ENCODE measurements at regions of chr11 and their contacts with region 1.

Region 1: DNA sequence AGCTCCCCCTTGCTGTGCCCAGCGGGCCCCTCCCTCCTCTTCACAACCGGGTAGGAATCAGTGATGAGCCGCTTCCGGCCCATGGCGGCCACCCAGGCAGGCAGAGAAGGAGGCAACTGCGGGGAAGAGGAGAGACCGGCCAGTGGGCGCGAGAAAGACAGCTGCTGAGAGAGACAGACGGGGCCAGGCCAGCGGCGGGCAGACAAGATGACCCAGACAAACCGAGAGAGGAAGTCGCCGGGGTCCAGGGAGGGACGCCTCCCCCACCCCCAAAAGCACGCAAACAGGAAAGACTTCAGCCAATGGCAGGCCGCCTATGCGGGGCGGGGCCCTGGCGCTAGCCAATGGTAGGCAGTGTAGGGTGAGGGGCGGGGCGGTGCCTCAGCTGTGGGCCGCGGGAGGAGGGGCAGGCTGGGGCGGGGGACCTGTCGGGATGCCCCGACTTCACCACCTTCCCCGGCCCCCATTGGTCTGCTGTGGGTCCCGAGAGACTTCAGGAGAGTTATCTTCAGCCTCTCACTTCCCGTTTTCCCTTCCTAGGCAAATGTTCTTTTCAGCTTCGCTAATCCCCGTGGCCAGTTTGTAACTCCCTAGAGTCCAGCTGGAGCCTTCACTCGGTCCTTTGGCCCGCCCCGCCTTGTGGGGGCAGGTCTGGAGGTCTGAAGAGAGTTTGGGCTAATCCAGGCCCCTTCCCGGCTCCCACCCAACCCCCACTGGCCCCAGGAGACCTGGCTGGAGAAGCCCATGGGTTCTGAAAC is at the start of gene POLD4:
- DNase-seq: peak; percentile 98
- ATAC-seq: peak; percentile 81
- H3K4me3 ChIP-seq: peak within 1 kb of the TSS; percentile 60 to 99 (median 83)
- H3K4me3 Mint-ChIP-seq: peak within 1 kb of the TSS; percentile 96
- H3K27ac ChIP-seq: peak within 1 kb of the TSS; percentile 94 to 96
- H3K27ac Mint-ChIP-seq: peak within 1 kb of the TSS; percentile 100
- H3K4me1 ChIP-seq: peaks cover 80 to 90% of the 10 kb centered on the region in 2 donors
- H3K4me1 Mint-ChIP-seq: peaks cover 87% of the 10 kb centered on the region
- H3K27me3 ChIP-seq: no peaks in the 10 kb centered on the region
- H3K27me3 Mint-ChIP-seq: no peaks in the 10 kb centered on the region
- CTCF ChIP-seq: no peak
- total RNA-seq, gene POLD4: 190 and 210 TPM in 2 replicates

Region 2: DNA sequence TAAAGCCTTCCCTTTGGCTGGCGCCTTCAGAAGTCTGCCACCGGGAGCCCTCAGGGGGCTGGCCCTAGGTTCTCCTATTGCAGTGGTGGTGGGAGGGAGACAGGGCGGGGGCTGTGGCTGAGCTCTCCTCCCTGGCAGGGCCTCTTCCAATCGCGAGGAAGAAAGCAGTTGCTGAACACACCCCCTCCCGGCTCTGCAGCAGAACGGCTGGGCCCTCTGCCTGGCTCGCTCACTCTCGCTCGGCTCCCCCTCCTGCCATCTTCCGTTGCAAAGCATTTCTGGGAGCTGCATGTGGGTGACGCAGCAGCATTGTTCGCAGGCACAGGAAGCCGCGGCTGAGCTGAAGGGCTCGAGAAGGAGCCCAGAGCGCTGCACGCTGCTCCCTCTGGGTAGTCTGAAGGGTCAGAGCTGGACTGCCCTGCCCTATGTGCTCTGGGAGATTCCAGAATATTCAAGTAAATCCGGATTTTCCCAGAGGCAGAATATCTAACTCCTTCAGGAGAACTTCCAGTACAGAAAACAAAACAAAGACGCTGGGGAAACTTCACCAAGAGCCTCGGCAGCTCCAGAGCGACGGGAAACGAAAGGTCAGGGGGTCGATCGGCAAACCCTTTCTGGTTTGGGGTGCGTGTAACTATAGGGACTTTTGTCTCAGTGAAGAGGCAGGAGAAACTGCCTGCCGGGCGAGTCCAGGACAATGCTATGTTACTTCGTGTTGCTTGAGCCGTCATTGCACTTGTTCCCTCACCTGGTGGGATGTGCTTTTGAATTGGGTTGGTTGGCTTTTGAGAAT is 113.5 kb before region 1 on chr11:
- CTCF ChIA-PET with region 1: interaction called, 5 read pairs
- POLR2A ChIA-PET with region 1: interaction called, 12 read pairs
- intact Hi-C with region 1: no loop called
- DNase-seq: peak; percentile 96
- ATAC-seq: peak; percentile 94
- H3K4me3 ChIP-seq: peak overlapping the region; percentile 71 to 99 (median 82)
- H3K4me3 Mint-ChIP-seq: peak overlapping the region; percentile 96
- H3K27ac ChIP-seq: peak overlapping the region; percentile 86 to 91
- H3K27ac Mint-ChIP-seq: peak overlapping the region; percentile 99
- H3K4me1 ChIP-seq: peaks cover 26 to 34% of the 10 kb centered on the region in 2 donors
- H3K4me1 Mint-ChIP-seq: peaks cover 43% of the 10 kb centered on the region
- H3K27me3 ChIP-seq: no peaks in the 10 kb centered on the region
- H3K27me3 Mint-ChIP-seq: no peaks in the 10 kb centered on the region
- CTCF ChIP-seq: no peak

Region 3: DNA sequence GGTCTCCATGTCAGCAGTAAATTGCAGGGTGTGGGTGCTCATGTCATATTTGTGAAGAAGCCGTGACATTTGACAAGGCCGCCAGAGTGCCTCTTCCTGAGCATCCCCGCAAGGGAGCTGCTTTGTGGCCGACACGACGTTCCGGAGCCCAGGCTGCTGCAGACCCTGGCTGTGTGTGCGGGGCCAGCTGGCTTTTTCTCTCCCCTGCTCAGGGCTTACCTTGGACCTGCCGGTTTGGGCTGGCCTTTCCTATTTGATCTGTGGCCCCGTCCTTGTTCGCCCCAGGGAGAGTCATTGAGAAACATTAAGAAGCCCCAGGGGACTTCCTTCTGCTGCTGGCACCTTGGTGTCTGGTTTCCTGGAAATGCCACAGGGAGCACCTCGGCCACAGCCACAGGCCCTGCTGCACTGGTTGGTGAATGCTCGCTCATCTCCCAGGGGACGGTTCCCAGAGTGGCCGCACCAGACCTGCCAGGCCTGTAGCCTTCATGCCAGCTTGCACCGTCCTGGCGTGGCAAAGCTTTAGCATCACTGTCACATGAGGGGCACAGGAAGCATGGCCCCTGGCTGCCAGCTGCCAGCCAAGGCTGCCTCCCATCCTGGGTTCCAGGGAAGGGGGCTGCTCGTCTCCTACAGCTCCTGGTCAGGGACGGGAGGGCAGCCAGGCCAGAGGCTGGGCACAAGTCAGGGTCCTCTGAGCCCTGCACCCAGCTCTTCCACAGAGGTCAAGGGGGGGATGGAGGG is 81.8 kb before region 1 on chr11:
- CTCF ChIA-PET with region 1: interaction called, 16 read pairs
- POLR2A ChIA-PET with region 1: interaction called, 26 read pairs
- intact Hi-C with region 1: no loop called
- DNase-seq: peak; percentile 65
- ATAC-seq: peak; percentile 29
- H3K4me3 ChIP-seq: peak overlapping the region in 4 of 5 experiments; percentile 0 to 89 (median 82)
- H3K4me3 Mint-ChIP-seq: peak overlapping the region; percentile 98
- H3K27ac ChIP-seq: peak overlapping the region; percentile 73 to 82
- H3K27ac Mint-ChIP-seq: peak overlapping the region; percentile 98
- H3K4me1 ChIP-seq: peaks cover 91 to 93% of the 10 kb centered on the region in 2 donors
- H3K4me1 Mint-ChIP-seq: peaks cover 92% of the 10 kb centered on the region
- H3K27me3 ChIP-seq: no peaks in the 10 kb centered on the region
- H3K27me3 Mint-ChIP-seq: no peaks in the 10 kb centered on the region
- CTCF ChIP-seq: no peak

Region 4: GRCh38 chr11:67288452-67289225 is 64.9 kb before region 1 on chr11:
- CTCF ChIA-PET with region 1: interaction called, 7 read pairs
- POLR2A ChIA-PET with region 1: interaction called, 11 read pairs
- intact Hi-C with region 1: no loop called
- DNase-seq: peak; percentile 95
- ATAC-seq: peak; percentile 76
- H3K4me3 ChIP-seq: peak overlapping the region; percentile 31 to 86 (median 79)
- H3K4me3 Mint-ChIP-seq: peak overlapping the region; percentile 76
- H3K27ac ChIP-seq: peak overlapping the region; percentile 86 to 92
- H3K27ac Mint-ChIP-seq: peak overlapping the region; percentile 97
- H3K4me1 ChIP-seq: peaks cover 44 to 55% of the 10 kb centered on the region in 2 donors
- H3K4me1 Mint-ChIP-seq: peaks cover 45% of the 10 kb centered on the region
- H3K27me3 ChIP-seq: no peaks in the 10 kb centered on the region
- H3K27me3 Mint-ChIP-seq: no peaks in the 10 kb centered on the region
- CTCF ChIP-seq: peak; percentile 61

Region 5: GRCh38 chr11:67373925-67374618 is 20.6 kb after region 1 on chr11:
- CTCF ChIA-PET with region 1: interaction called, 2,379 read pairs
- POLR2A ChIA-PET with region 1: interaction called, 323 read pairs
- intact Hi-C with region 1: loop called (anchors 1 kb)
- DNase-seq: peak; percentile 77
- ATAC-seq: peak; percentile 35
- H3K4me3 ChIP-seq: peak overlapping the region in 4 of 5 experiments; percentile 48 to 95 (median 76)
- H3K4me3 Mint-ChIP-seq: peak overlapping the region; percentile 94
- H3K27ac ChIP-seq: peak overlapping the region; percentile 41 to 89
- H3K27ac Mint-ChIP-seq: peak overlapping the region; percentile 92
- H3K4me1 ChIP-seq: peaks cover 40 to 47% of the 10 kb centered on the region in 2 donors
- H3K4me1 Mint-ChIP-seq: peaks cover 50% of the 10 kb centered on the region
- H3K27me3 ChIP-seq: no peaks in the 10 kb centered on the region
- H3K27me3 Mint-ChIP-seq: no peaks in the 10 kb centered on the region
- CTCF ChIP-seq: peak; percentile 66

Region 6: GRCh38 chr11:67452141-67452952 is 98.9 kb after region 1 on chr11 and contains the start of gene GPR152:
- CTCF ChIA-PET with region 1: no interaction called
- POLR2A ChIA-PET with region 1: no interaction called
- intact Hi-C with region 1: no loop called
- DNase-seq: no peak
- ATAC-seq: no peak
- H3K4me3 ChIP-seq: no peak within 1 kb of the TSS
- H3K4me3 Mint-ChIP-seq: no peak within 1 kb of the TSS
- H3K27ac ChIP-seq: no peak within 1 kb of the TSS
- H3K27ac Mint-ChIP-seq: peak within 1 kb of the TSS; percentile 81
- H3K4me1 ChIP-seq: peaks cover 48 to 86% of the 10 kb centered on the region in 2 donors
- H3K4me1 Mint-ChIP-seq: peaks cover 44% of the 10 kb centered on the region
- H3K27me3 ChIP-seq: no peaks in the 10 kb centered on the region
- H3K27me3 Mint-ChIP-seq: no peaks in the 10 kb centered on the region
- CTCF ChIP-seq: no peak
- total RNA-seq, gene GPR152: not detected in 2 replicates

Region 7: GRCh38 chr11:67468835-67469811 is 115.6 kb after region 1 on chr11 and contains the start of gene TMEM134:
- CTCF ChIA-PET with region 1: interaction called, 3 read pairs
- POLR2A ChIA-PET with region 1: interaction called, 7 read pairs
- intact Hi-C with region 1: loop called (anchors 1 kb)
- DNase-seq: peak; percentile 92
- ATAC-seq: peak; percentile 75
- H3K4me3 ChIP-seq: peak within 1 kb of the TSS; percentile 61 to 96 (median 91)
- H3K4me3 Mint-ChIP-seq: peak within 1 kb of the TSS; percentile 95
- H3K27ac ChIP-seq: peak within 1 kb of the TSS; percentile 78 to 87
- H3K27ac Mint-ChIP-seq: peak within 1 kb of the TSS; percentile 95
- H3K4me1 ChIP-seq: peaks cover 31 to 55% of the 10 kb centered on the region in 2 donors
- H3K4me1 Mint-ChIP-seq: peaks cover 49% of the 10 kb centered on the region
- H3K27me3 ChIP-seq: no peaks in the 10 kb centered on the region
- H3K27me3 Mint-ChIP-seq: no peaks in the 10 kb centered on the region
- CTCF ChIP-seq: peak; percentile 63
- total RNA-seq, gene TMEM134: 154 and 167 TPM in 2 replicates